Heart left ventricle (tissue), 16 donors: ENCODE measurements at regions of chr5 and their contacts with region 1.

Region 1: GRCh38 chr5:134533115-134533815 is 7.8 kb downstream of the JADE2 start:
- DNase-seq: peak in 4 of 5 donors; percentile 49 to 79 (median 62)
- ATAC-seq: peak in 3 of 4 donors; percentile 62 to 74 (median 74)
- H3K4me3 ChIP-seq: no peak overlapping the region
- H3K27ac ChIP-seq: peak overlapping the region in 7 of 12 donors; percentile 4 to 52 (median 37)
- H3K4me1 ChIP-seq: peaks cover 10 to 70% (median 58%) of the 10 kb centered on the region in 12 donors
- H3K27me3 ChIP-seq: no peaks in the 10 kb centered on the region
- CTCF ChIP-seq: no peak
- POLR2A ChIP-seq: no peak

Region 2: GRCh38 chr5:134568761-134569695 is 35.8 kb after region 1 on chr5:
- intact Hi-C with region 1: loop called in 1 of 10 experiments (anchors 5 kb)
- DNase-seq: peak; percentile 80 to 90 (median 90)
- ATAC-seq: peak; percentile 66 to 78 (median 73)
- H3K4me3 ChIP-seq: no peak overlapping the region
- H3K27ac ChIP-seq: peak overlapping the region; percentile 40 to 90 (median 83)
- H3K4me1 ChIP-seq: peaks cover 16 to 61% (median 41%) of the 10 kb centered on the region in 12 donors
- H3K27me3 ChIP-seq: no peaks in the 10 kb centered on the region
- CTCF ChIP-seq: no peak
- POLR2A ChIP-seq: no peak

Region 3: GRCh38 chr5:134794082-134794481 is 260.8 kb after region 1 on chr5:
- intact Hi-C with region 1: no loop called
- DNase-seq: no peak
- ATAC-seq: no peak
- H3K4me3 ChIP-seq: no peak overlapping the region
- H3K27ac ChIP-seq: no peak overlapping the region
- H3K4me1 ChIP-seq: no peaks in the 10 kb centered on the region
- H3K27me3 ChIP-seq: no peaks in the 10 kb centered on the region
- CTCF ChIP-seq: no peak
- POLR2A ChIP-seq: no peak